Activated B cell treated with CpG ODN at 0.5 μM for 24 hours (primary cell): ENCODE measurements at regions of chr2 and their contacts with region 1.

Region 1: GRCh38 chr2:165497659-165498317 is 28.3 kb downstream of the CSRNP3 start:
- DNase-seq: no peak
- ATAC-seq: no peak
- H3K4me3 Mint-ChIP-seq: no peak overlapping the region
- H3K27ac Mint-ChIP-seq: no peak overlapping the region
- H3K4me1 Mint-ChIP-seq: no peaks in the 10 kb centered on the region
- H3K27me3 Mint-ChIP-seq: no peaks in the 10 kb centered on the region
- CTCF ChIP-seq: no peak

Region 2: DNA sequence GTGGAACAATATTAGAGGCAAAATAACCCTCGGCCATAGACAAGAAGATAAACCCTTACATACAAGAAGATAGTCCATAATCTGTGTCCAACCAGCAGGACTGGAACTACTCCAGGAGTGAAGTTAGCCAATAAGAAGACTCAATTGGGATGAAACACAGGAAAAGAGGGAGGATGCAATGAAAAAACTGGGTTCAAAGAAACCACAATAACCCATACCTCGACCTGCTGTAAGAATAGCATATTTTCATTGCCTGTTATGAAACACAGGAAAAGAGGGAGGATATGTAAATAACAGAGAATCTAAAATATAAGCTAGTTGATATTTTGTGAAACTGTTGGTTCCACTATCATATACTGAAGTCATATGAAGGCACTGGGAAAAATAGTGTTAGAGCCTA is 115.4 kb before region 1 on chr2:
- CTCF ChIA-PET with region 1: no interaction called
- POLR2A ChIA-PET with region 1: no interaction called
- intact Hi-C with region 1: no loop called
- DNase-seq: no peak
- ATAC-seq: no peak
- H3K4me3 Mint-ChIP-seq: no peak overlapping the region
- H3K27ac Mint-ChIP-seq: no peak overlapping the region
- H3K4me1 Mint-ChIP-seq: no peaks in the 10 kb centered on the region
- H3K27me3 Mint-ChIP-seq: peaks cover 3% of the 10 kb centered on the region
- CTCF ChIP-seq: no peak

Region 3: GRCh38 chr2:165479856-165480255 is 17.9 kb before region 1 on chr2:
- CTCF ChIA-PET with region 1: no interaction called
- POLR2A ChIA-PET with region 1: interaction called, 3 read pairs
- intact Hi-C with region 1: loop called (anchors 1 kb)
- DNase-seq: no peak
- ATAC-seq: no peak
- H3K4me3 Mint-ChIP-seq: no peak overlapping the region
- H3K27ac Mint-ChIP-seq: no peak overlapping the region
- H3K4me1 Mint-ChIP-seq: no peaks in the 10 kb centered on the region
- H3K27me3 Mint-ChIP-seq: no peaks in the 10 kb centered on the region
- CTCF ChIP-seq: no peak

Region 4: GRCh38 chr2:165897726-165898125 is 399.9 kb after region 1 on chr2:
- CTCF ChIA-PET with region 1: no interaction called
- POLR2A ChIA-PET with region 1: no interaction called
- intact Hi-C with region 1: no loop called
- DNase-seq: no peak
- ATAC-seq: no peak
- H3K4me3 Mint-ChIP-seq: no peak overlapping the region
- H3K27ac Mint-ChIP-seq: no peak overlapping the region
- H3K4me1 Mint-ChIP-seq: peaks cover 8% of the 10 kb centered on the region
- H3K27me3 Mint-ChIP-seq: no peaks in the 10 kb centered on the region
- CTCF ChIP-seq: no peak